Cardiac septum (tissue), 1 donor: ENCODE measurements at regions of chr6 and their contacts with region 1.

Region 1: GRCh38 chr6:159654483-159655098 is 38.5 kb downstream of the SOD2 start:
- DNase-seq: no peak

Region 2: DNA sequence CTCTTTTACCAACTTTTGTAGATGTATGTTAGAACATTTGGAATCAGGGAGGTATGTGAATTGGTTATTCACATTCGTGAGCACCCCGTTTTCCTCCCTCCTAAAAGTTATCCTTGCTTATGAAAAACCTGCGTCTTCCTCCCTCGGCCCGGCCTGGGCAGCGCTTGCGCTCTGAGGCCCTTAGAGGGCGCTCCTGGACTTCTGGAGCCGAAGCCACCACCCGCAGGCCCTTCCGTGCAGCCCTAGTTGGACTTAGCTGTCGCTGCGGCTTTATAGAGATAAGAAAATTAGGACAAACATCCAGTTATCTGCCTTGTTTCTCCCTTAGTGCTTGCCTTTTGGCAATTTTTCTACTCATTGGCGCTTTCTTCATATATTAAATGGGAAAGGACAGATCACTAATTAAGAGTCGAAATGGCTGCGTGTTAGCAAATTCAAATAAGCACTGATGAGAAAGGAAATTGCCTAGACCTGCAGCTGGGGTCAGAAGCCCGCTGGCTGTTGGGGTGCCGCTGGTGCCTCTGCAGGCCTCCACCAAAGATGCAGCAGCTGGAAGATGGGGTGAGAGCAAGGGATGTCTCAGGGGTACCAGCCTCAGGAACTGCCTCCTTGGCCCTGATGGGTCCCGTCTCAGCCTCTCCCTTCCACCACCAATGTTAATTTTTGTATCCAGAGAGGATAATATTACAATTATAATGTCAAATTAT is 480.2 kb before region 1 on chr6:
- intact Hi-C with region 1: loop called (anchors 2 kb)
- DNase-seq: no peak

Region 3: GRCh38 chr6:159252955-159253508 is 401.6 kb before region 1 on chr6:
- intact Hi-C with region 1: loop called (anchors 5 kb)
- DNase-seq: no peak

Region 4: DNA sequence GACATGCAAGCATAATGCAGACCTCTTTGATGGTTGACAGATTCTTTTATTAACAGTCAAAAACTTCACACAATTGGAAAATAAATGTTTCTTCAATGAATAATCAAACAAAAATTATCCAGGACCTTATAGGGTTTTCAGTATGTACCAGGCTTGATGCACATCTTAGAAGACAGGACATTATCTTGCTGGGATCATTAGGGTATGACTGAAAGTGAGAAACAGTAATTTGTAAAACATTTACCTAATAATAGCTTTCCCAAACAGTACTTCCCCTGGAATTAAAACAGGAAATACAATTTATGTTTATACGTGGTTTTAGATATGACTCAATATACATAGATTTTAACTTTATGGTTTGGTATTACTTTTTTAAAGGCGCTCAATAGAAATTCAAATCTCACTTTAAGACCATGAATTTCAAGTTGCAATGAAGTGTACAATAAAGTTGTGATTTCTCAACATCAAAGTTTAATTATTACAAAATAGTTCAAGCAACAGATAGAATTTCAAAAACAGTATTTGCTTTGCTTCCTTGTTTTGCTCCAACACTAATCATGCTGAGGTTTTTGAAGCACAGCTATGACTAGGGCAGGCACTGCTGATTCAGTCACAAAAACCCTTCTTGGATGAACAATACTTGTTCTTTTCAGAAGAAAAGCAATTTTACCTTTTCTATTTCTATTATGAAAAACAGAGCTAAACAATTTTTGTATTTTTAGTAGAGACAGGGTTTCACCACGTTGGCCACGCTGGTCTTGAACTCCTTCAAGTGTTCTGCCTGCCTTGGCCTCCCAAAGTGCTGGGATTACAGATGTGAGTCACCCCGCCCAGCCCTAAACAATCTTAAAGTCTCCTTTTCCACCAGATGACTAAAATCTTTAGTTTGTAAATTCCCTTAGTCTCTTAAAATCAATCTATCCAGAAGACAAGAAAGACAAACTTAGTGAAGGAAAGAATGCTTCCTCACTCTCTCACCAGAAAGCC is 24.8 kb after region 1 on chr6:
- intact Hi-C with region 1: no loop called
- DNase-seq: no peak